Gastrocnemius medialis (tissue), 4 donors: ENCODE measurements at regions of chr19 and their contacts with region 1.

Region 1: GRCh38 chr19:35716801-35717666 is 769 bp upstream of the KMT2B start:
- DNase-seq: peak; percentile 75 to 82
- ATAC-seq: peak; percentile 82 to 84
- H3K4me3 ChIP-seq: peak overlapping the region; percentile 92 to 99 (median 96)
- H3K27ac ChIP-seq: peak overlapping the region; percentile 84 to 95 (median 92)
- H3K4me1 ChIP-seq: peaks cover 21 to 25% of the 10 kb centered on the region in 2 donors
- H3K27me3 ChIP-seq: no peaks in the 10 kb centered on the region
- CTCF ChIP-seq: peak; percentile 97 to 99 (median 98)
- POLR2A ChIP-seq: peak; percentile 45 to 48

Region 2: GRCh38 chr19:35545001-35545911 is 171.8 kb before region 1 on chr19 and contains the start of gene TMEM147:
- in situ Hi-C with region 1: loop called in 2 of 4 experiments (anchors 10 to 25 kb)
- intact Hi-C with region 1: loop called (anchors 1 kb)
- DNase-seq: peak; percentile 87
- ATAC-seq: peak; percentile 91 to 92
- H3K4me3 ChIP-seq: peak within 1 kb of the TSS; percentile 71 to 90 (median 80)
- H3K27ac ChIP-seq: peak within 1 kb of the TSS; percentile 80 to 89 (median 87)
- H3K4me1 ChIP-seq: peaks cover 18 to 25% of the 10 kb centered on the region in 2 donors
- H3K27me3 ChIP-seq: no peaks in the 10 kb centered on the region
- CTCF ChIP-seq: no peak
- POLR2A ChIP-seq: peak; percentile 63 to 70
- total RNA-seq, gene TMEM147: 86.2 to 145 (median 119) TPM

Region 3: DNA sequence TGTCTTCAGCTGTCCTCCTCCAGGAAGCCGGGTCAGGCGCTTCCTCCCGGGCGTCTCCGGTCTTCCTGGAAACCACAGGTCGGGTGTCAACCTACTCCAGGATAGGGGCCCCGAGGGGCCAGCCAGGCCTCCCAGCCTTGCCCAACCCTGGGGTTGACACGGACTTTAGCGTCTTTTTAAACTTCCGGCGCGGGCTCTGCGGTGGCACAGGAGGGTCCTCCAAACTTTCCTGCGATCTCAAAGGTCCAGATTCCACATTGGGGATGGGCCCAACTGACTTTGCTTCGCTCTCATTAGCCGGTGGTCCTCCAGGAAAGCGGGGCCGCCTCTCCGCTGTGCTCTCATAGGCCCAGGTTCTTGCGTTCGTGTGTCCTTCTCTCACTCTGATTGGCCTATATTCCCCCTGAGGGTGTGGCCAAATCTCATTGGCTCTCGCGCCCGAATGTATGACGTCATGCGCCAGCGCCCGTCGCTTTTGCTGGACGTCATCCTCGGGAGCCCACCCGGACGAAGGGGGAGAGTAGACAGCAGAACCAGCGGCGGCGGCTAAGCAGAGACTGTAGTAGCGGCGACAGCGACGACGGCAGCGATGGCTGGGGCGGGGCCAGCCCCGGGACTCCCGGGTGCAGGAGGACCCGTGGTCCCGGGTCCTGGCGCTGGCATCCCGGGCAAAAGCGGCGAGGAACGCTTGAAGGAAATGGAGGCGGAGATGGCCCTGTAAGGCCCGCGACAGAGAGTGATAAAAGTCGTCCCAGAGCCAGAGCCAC is 88.3 kb before region 1 on chr19 and contains the start of gene RBM42:
- in situ Hi-C with region 1: no loop called
- intact Hi-C with region 1: loop called (anchors 1 kb)
- DNase-seq: peak; percentile 97 to 98
- ATAC-seq: peak; percentile 99 to 100
- H3K4me3 ChIP-seq: peak within 1 kb of the TSS; percentile 68 to 100 (median 96)
- H3K27ac ChIP-seq: peak within 1 kb of the TSS; percentile 89 to 95 (median 94)
- H3K4me1 ChIP-seq: peaks cover 8 to 23% of the 10 kb centered on the region in 2 donors
- H3K27me3 ChIP-seq: no peaks in the 10 kb centered on the region
- CTCF ChIP-seq: peak in 2 of 5 experiments; percentile 51 to 67
- POLR2A ChIP-seq: peak; percentile 71
- total RNA-seq, gene RBM42: 45.8 to 77.8 (median 75.4) TPM

Region 4: DNA sequence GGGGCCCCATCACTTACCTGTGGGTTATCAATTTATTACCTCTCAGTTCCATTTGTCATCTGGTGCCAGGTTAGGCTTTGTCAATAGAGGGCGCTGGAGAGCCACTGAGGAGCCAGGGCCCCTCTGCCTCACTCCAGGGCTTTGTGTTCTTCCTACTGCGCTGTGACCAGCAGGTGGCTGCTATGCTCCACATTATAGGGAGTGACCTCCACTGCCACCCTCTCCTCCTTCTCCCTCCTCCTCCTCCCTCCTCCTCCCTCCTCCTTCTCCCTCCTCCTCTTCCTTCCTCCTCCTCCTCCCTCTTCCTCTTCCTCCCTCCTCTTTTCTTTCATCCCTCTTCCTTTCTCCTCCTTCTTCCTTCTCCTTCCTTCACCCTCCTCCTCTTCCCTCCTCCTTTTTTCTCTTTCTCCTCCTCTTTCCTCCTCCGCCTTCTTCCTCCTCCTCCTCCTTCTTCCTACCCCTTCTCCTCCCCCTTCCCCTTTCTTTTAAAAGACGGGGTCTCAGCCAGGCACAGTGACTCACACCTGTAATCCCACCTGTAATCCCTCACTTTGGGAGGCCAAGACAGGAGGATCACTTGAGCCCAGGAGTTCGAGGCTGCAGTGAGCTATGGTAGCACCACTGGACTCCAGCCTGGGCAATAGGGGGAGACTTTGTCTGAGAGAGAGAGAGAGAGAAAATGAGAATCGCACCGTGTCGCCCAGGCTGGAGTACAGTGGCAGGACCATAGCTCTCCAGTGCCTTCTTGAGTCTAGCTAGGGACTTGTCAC is 23.0 kb before region 1 on chr19:
- in situ Hi-C with region 1: no loop called
- intact Hi-C with region 1: loop called (anchors 1 kb)
- DNase-seq: peak; percentile 71 to 86
- ATAC-seq: peak; percentile 100
- H3K4me3 ChIP-seq: no peak overlapping the region
- H3K27ac ChIP-seq: no peak overlapping the region
- H3K4me1 ChIP-seq: no peaks in the 10 kb centered on the region
- H3K27me3 ChIP-seq: peaks cover 0 to 2% (median 0%) of the 10 kb centered on the region in 3 donors
- CTCF ChIP-seq: peak; percentile 94 to 98 (median 97)
- POLR2A ChIP-seq: no peak

Region 5: GRCh38 chr19:35740423-35741202 is 23.6 kb after region 1 on chr19:
- in situ Hi-C with region 1: no loop called
- intact Hi-C with region 1: loop called (anchors 1 kb)
- DNase-seq: peak; percentile 96 to 98
- ATAC-seq: peak; percentile 74
- H3K4me3 ChIP-seq: peak overlapping the region; percentile 52 to 88 (median 78)
- H3K27ac ChIP-seq: peak overlapping the region; percentile 77 to 86 (median 82)
- H3K4me1 ChIP-seq: peaks cover 20 to 26% of the 10 kb centered on the region in 2 donors
- H3K27me3 ChIP-seq: no peaks in the 10 kb centered on the region
- CTCF ChIP-seq: peak in 3 of 5 experiments; percentile 9 to 34 (median 24)
- POLR2A ChIP-seq: peak in 1 of 2 donors; percentile 56

Region 6: GRCh38 chr19:35767288-35768081 is 50.5 kb after region 1 on chr19:
- in situ Hi-C with region 1: no loop called
- intact Hi-C with region 1: no loop called
- DNase-seq: no peak
- ATAC-seq: no peak
- H3K4me3 ChIP-seq: no peak overlapping the region
- H3K27ac ChIP-seq: no peak overlapping the region
- H3K4me1 ChIP-seq: no peaks in the 10 kb centered on the region
- H3K27me3 ChIP-seq: no peaks in the 10 kb centered on the region
- CTCF ChIP-seq: no peak
- POLR2A ChIP-seq: no peak

Region 7: GRCh38 chr19:36054119-36054732 is 337.2 kb after region 1 on chr19 and contains the start of gene THAP8:
- in situ Hi-C with region 1: no loop called
- intact Hi-C with region 1: no loop called
- DNase-seq: peak; percentile 100
- ATAC-seq: peak; percentile 92 to 95
- H3K4me3 ChIP-seq: peak within 1 kb of the TSS; percentile 67 to 93 (median 83)
- H3K27ac ChIP-seq: peak within 1 kb of the TSS; percentile 87 to 99 (median 96)
- H3K4me1 ChIP-seq: peaks cover 12 to 13% of the 10 kb centered on the region in 2 donors
- H3K27me3 ChIP-seq: no peaks in the 10 kb centered on the region
- CTCF ChIP-seq: peak; percentile 50 to 58 (median 54)
- POLR2A ChIP-seq: peak; percentile 65 to 72
- total RNA-seq, gene THAP8: 6.1 to 10.5 (median 6.1) TPM